Naive thymus-derived CD4-positive, alpha-beta T cell (primary cell): ENCODE measurements at regions of chr18 and their contacts with region 1.

Region 1: GRCh38 chr18:3177902-3178687 is 41.7 kb downstream of the MYOM1 start:
- DNase-seq: peak in 4 of 9 donors; percentile 2 to 23 (median 3)
- ATAC-seq: peak; percentile 90
- H3K4me3 ChIP-seq: no peak overlapping the region
- H3K4me3 Mint-ChIP-seq: no peak overlapping the region
- H3K27ac ChIP-seq: no peak overlapping the region
- H3K27ac Mint-ChIP-seq: no peak overlapping the region
- H3K4me1 ChIP-seq: no peaks in the 10 kb centered on the region
- H3K4me1 Mint-ChIP-seq: no peaks in the 10 kb centered on the region
- H3K27me3 ChIP-seq: no peaks in the 10 kb centered on the region
- H3K27me3 Mint-ChIP-seq: no peaks in the 10 kb centered on the region

Region 2: GRCh38 chr18:3209859-3210569 is 31.9 kb after region 1 on chr18:
- CTCF ChIA-PET with region 1: no interaction called
- POLR2A ChIA-PET with region 1: no interaction called
- intact Hi-C with region 1: loop called in 1 of 2 experiments (anchors 5 kb)
- DNase-seq: no peak
- ATAC-seq: no peak
- H3K4me3 ChIP-seq: no peak overlapping the region
- H3K4me3 Mint-ChIP-seq: no peak overlapping the region
- H3K27ac ChIP-seq: no peak overlapping the region
- H3K27ac Mint-ChIP-seq: peak overlapping the region in 2 of 9 donors; percentile 26 to 59
- H3K4me1 ChIP-seq: no peaks in the 10 kb centered on the region
- H3K4me1 Mint-ChIP-seq: peaks cover 0 to 18% (median 12%) of the 10 kb centered on the region in 7 donors
- H3K27me3 ChIP-seq: no peaks in the 10 kb centered on the region
- H3K27me3 Mint-ChIP-seq: peaks cover 0 to 2% (median 0%) of the 10 kb centered on the region in 5 donors